Activated CD8-positive, alpha-beta T cell treated with anti-CD3 and anti-CD28 coated beads, Interleukin-2, amount 10 ng/mL, durations not matched to agents 7 days and 5 days (primary cell): ENCODE measurements at regions of chr1 and their contacts with region 1.

Region 1: GRCh38 chr1:182789138-182790076 is at the start of gene NPL:
- DNase-seq: peak; percentile 89
- ATAC-seq: peak; percentile 94
- H3K4me3 Mint-ChIP-seq: peak within 1 kb of the TSS; percentile 80
- H3K27ac Mint-ChIP-seq: peak within 1 kb of the TSS; percentile 68
- H3K4me1 Mint-ChIP-seq: peaks cover 12% of the 10 kb centered on the region
- H3K27me3 Mint-ChIP-seq: peaks cover 29% of the 10 kb centered on the region
- total RNA-seq, gene NPL: 1.1 to 1.7 TPM

Region 2: GRCh38 chr1:182588500-182589452 is 200.6 kb before region 1 on chr1 and contains the start of gene RNASEL:
- CTCF ChIA-PET with region 1: interaction called, 899 read pairs
- POLR2A ChIA-PET with region 1: interaction called, 4 read pairs
- DNase-seq: peak; percentile 65
- ATAC-seq: peak; percentile 94
- H3K4me3 Mint-ChIP-seq: peak within 1 kb of the TSS; percentile 83
- H3K27ac Mint-ChIP-seq: peak within 1 kb of the TSS; percentile 98
- H3K4me1 Mint-ChIP-seq: peaks cover 17% of the 10 kb centered on the region
- H3K27me3 Mint-ChIP-seq: peaks cover 5% of the 10 kb centered on the region
- total RNA-seq, gene RNASEL: 5.7 to 6.0 TPM

Region 3: GRCh38 chr1:182752077-182752988 is 37.1 kb before region 1 on chr1:
- CTCF ChIA-PET with region 1: no interaction called
- POLR2A ChIA-PET with region 1: no interaction called
- DNase-seq: no peak
- ATAC-seq: no peak
- H3K4me3 Mint-ChIP-seq: no peak overlapping the region
- H3K27ac Mint-ChIP-seq: no peak overlapping the region
- H3K4me1 Mint-ChIP-seq: no peaks in the 10 kb centered on the region
- H3K27me3 Mint-ChIP-seq: peaks cover 23% of the 10 kb centered on the region

Region 4: DNA sequence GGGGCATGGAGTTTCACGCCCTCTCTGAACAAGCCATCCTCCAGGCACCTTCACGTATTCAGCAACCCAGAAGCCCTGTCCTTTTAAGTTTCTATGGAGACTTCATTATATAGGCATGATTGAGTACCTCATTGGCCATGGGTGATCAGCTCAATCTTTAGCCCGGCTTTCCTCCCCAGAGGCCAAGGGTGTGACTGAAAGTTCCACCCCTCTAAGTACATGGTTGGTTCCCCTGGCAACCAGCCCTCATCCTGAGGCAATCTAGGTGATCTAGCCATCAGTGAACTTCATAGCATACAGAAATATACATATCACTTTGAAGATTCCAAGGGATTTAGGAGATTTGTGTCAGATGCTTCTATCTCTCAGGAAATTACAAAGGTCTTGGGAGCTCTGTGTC is 28.4 kb after region 1 on chr1:
- CTCF ChIA-PET with region 1: no interaction called
- POLR2A ChIA-PET with region 1: no interaction called
- DNase-seq: no peak
- ATAC-seq: no peak
- H3K4me3 Mint-ChIP-seq: no peak overlapping the region
- H3K27ac Mint-ChIP-seq: no peak overlapping the region
- H3K4me1 Mint-ChIP-seq: no peaks in the 10 kb centered on the region
- H3K27me3 Mint-ChIP-seq: no peaks in the 10 kb centered on the region

Region 5: DNA sequence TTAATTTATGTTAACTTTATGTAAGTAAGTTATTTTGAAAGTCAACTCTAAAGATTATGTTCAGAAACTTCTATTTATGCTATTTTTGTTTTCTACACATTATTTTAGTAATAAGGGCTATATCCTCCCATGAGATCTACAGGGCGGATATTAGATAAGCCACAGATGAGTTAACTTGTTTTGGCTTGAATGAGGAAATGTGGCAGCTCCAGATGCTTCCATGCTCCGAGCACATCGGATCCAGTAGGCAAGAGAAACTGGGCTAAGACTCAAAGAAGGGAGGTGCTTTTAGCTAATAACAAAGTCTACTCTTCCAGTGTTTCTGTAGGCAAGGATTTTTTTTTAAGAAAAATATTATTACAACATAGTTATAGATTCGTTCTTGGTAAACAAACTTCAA is 213.8 kb after region 1 on chr1:
- CTCF ChIA-PET with region 1: no interaction called
- POLR2A ChIA-PET with region 1: no interaction called
- DNase-seq: no peak
- ATAC-seq: no peak
- H3K4me3 Mint-ChIP-seq: no peak overlapping the region
- H3K27ac Mint-ChIP-seq: no peak overlapping the region
- H3K4me1 Mint-ChIP-seq: no peaks in the 10 kb centered on the region
- H3K27me3 Mint-ChIP-seq: peaks cover 35% of the 10 kb centered on the region